Esophagus muscularis mucosa (tissue), 4 donors: ENCODE measurements at regions of chr2 and their contacts with region 1.

Region 1: GRCh38 chr2:222860740-222861410 is at the start of gene ACSL3:
- DNase-seq: peak; percentile 99
- H3K4me3 ChIP-seq: peak within 1 kb of the TSS; percentile 92 to 98 (median 94)
- H3K27ac ChIP-seq: peak within 1 kb of the TSS; percentile 98
- H3K4me1 ChIP-seq: peaks cover 44 to 54% (median 49%) of the 10 kb centered on the region in 4 donors
- H3K27me3 ChIP-seq: no peaks in the 10 kb centered on the region
- CTCF ChIP-seq: no peak
- EP300 ChIP-seq: no peak
- POLR2A ChIP-seq: peak; percentile 96
- total RNA-seq, gene ACSL3: 31.1 to 56.3 (median 52.5) TPM

Region 2: DNA sequence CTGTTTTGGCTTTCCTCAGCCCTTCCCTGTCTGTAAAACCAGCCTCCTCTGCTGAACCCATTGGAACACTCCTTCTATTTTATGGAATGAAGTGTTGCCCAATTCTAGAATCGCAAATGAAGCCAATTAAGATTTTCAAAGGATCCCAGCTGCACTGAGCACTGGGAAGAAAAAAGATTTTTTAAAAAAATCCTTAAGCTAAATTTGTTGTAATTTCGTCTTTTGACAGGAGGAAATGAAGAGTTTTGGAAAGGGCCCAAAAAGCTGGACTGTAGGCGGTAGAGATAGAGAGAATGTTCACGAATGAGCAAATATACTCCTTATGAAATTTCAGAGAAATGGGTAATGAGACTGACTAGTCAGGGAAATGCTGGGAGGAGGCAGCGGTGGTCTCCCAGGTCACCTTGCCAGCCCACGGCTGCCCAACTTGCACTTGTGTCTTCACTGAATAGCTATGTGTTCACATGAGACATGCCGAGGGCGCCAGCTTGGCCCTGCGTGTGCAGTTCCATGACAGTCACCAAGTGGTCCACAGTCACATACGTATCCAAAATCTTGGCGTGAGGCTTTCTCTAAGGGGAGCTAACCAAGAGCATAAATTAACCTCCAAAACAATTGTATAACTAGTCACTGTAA is 366.7 kb before region 1 on chr2:
- intact Hi-C with region 1: no loop called
- DNase-seq: no peak
- H3K4me3 ChIP-seq: no peak overlapping the region
- H3K27ac ChIP-seq: no peak overlapping the region
- H3K4me1 ChIP-seq: peaks cover 0 to 4% (median 0%) of the 10 kb centered on the region in 4 donors
- H3K27me3 ChIP-seq: no peaks in the 10 kb centered on the region
- CTCF ChIP-seq: no peak
- EP300 ChIP-seq: no peak
- POLR2A ChIP-seq: no peak

Region 3: DNA sequence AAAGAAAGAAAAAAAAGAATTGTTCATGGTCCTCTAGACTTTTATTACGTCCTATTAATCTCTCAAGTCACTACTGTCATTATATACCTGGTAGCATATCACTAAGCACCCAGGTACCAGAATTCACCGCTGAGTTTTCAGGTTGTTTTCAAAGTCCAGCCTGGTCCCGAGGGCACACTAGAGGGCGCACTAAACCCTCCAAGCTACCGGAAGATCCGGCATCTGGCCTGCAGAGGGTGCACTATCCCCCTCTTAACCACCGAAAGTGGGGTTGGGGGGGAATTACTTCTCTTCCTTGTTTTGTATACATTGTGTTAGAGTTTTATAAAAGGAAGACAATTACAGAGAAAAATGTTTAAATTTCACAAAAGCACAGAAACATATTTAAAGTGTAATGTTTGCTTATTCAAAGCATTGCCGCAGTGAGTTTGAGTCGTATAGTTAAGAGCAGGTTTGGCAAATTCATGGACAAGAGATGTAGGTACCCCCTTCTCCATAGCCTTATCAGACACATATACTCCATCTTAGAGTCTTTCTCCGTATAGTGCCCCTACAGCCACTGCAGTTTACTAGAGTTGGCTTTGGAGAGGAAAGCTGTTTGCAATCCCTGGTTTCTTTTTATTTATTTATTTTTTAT is 170.2 kb before region 1 on chr2:
- intact Hi-C with region 1: loop called (anchors 5 kb)
- DNase-seq: no peak
- H3K4me3 ChIP-seq: no peak overlapping the region
- H3K27ac ChIP-seq: no peak overlapping the region
- H3K4me1 ChIP-seq: no peaks in the 10 kb centered on the region
- H3K27me3 ChIP-seq: no peaks in the 10 kb centered on the region
- CTCF ChIP-seq: peak; percentile 93 to 98 (median 94)
- EP300 ChIP-seq: no peak
- POLR2A ChIP-seq: no peak

Region 4: DNA sequence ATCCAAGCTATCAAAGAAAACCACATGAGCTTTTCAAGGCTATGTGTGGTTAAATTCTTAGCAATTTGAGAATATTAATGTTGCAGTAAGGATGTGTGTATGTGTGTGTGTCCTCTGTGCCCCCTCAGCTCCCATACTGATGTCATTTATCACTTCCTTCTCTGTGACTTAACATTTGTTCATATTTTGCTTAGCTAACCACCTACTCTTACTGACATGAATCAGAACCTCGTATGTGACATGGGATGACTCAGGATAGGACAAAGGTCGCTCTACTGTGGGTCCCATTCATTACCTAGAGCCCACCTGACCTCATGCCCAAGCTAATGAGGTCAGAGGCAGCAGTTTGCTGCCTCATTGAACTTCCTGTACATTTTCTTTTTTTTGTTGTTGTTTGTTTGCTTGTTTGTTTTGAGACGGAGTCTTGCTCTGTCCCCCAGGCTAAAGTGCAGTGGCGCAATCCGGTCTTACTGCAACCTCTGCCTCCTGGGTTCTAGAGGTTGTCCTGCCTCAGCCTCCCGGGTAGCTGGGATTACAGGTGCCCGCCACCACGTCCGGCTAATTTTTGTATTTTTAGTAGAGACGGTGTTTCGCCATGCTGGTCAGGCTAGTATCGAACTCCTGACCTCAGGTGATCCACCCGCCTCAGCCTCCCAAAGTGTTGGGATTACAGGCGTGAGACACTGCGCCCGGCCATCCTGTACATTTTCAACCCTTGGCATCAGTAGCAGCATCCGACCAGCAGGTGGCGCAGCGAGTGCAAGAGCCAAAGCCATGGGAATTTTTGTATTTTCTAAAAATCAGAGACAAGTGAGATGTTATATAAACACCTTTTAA is 153.0 kb before region 1 on chr2:
- intact Hi-C with region 1: loop called (anchors 5 kb)
- DNase-seq: peak; percentile 94
- H3K4me3 ChIP-seq: no peak overlapping the region
- H3K27ac ChIP-seq: no peak overlapping the region
- H3K4me1 ChIP-seq: peaks cover 14 to 44% (median 40%) of the 10 kb centered on the region in 4 donors
- H3K27me3 ChIP-seq: no peaks in the 10 kb centered on the region
- CTCF ChIP-seq: peak; percentile 93 to 97 (median 97)
- EP300 ChIP-seq: no peak
- POLR2A ChIP-seq: no peak

Region 5: GRCh38 chr2:222753251-222753824 is 107.5 kb before region 1 on chr2:
- intact Hi-C with region 1: no loop called
- DNase-seq: no peak
- H3K4me3 ChIP-seq: no peak overlapping the region
- H3K27ac ChIP-seq: peak overlapping the region; percentile 31 to 69 (median 58)
- H3K4me1 ChIP-seq: peaks cover 15 to 34% (median 23%) of the 10 kb centered on the region in 4 donors
- H3K27me3 ChIP-seq: no peaks in the 10 kb centered on the region
- CTCF ChIP-seq: no peak
- EP300 ChIP-seq: no peak
- POLR2A ChIP-seq: no peak

Region 6: DNA sequence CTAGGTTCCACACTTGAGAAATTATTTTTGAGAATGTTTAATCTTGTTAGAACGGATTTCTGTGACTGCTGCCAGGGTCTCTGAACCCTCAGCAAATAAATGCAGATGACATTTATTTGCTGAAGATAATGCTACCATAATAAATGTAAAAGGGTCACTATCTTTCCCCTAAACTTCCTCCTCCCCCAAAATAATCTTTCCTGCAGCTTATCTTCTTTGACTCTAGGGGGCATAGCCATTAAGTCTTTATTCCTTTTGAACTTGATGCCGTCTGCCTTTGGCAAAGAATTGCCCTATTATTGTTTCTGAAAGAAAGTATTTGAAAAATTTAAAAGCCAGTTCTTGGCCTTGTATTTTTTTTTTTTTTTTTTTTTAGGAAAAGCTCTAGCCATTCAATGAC is 63.6 kb before region 1 on chr2:
- intact Hi-C with region 1: loop called (anchors 10 kb)
- DNase-seq: no peak
- H3K4me3 ChIP-seq: no peak overlapping the region
- H3K27ac ChIP-seq: peak overlapping the region in 3 of 4 donors; percentile 21 to 52 (median 50)
- H3K4me1 ChIP-seq: peaks cover 19 to 40% (median 32%) of the 10 kb centered on the region in 4 donors
- H3K27me3 ChIP-seq: no peaks in the 10 kb centered on the region
- CTCF ChIP-seq: peak; percentile 30 to 51 (median 38)
- EP300 ChIP-seq: no peak
- POLR2A ChIP-seq: no peak